ENCODE measurements at regions of chr5 and their contacts with region 1.

Region 1: GRCh38 chr5:14326035-14326903 is 183.1 kb downstream of the TRIO start:
- DNase-seq: no peak
- ATAC-seq: peak; percentile 53
- H3K4me3 Mint-ChIP-seq: no peak overlapping the region
- H3K27ac Mint-ChIP-seq: peak overlapping the region; percentile 0
- H3K4me1 Mint-ChIP-seq: peaks cover 34% of the 10 kb centered on the region
- H3K27me3 Mint-ChIP-seq: no peaks in the 10 kb centered on the region
- CTCF ChIP-seq: no peak

Region 2: DNA sequence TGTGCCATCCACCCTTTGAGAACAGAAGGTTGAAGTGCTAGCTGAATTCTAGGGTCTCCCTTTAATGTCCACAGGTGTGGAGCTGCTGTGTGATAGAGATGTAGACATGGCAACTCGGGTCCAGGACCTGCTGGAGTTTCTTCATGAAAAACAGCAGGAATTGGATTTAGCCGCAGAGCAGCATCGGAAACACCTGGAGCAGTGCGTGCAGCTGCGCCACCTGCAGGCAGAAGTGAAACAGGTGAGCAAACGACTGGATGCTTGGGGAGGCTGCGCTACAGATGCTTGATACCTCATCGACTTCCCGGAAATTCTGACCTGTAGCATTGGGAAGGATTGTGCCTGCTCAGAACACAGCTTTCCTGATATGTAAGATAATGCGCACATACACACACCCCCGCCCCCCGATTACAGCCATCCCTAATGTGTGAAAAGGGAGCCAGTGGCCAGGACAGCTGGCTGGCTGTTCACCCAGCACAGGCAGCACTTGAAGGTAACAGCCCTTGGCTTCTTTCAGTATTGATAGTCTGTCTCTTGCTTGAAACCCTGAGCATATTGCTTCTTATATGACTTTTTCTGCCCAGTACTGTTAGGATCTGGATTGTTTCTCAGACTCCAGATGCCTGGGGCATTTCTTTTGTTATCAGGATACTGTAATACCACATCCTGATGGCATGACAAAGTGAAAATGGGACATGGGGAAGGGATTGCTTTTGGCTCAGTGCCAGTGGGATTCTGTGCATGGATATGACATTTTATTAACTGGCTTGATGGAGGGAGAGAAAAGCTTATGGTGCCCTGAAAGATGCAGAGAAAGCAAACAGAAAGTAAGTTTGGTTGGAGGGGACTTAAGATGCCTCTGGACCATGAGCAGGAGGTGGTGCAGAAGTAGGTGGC is 38.6 kb after region 1 on chr5:
- CTCF ChIA-PET with region 1: interaction called, 26 read pairs
- POLR2A ChIA-PET with region 1: no interaction called
- intact Hi-C with region 1: loop called (anchors 1 kb)
- DNase-seq: no peak
- ATAC-seq: no peak
- H3K4me3 Mint-ChIP-seq: no peak overlapping the region
- H3K27ac Mint-ChIP-seq: no peak overlapping the region
- H3K4me1 Mint-ChIP-seq: peaks cover 19% of the 10 kb centered on the region
- H3K27me3 Mint-ChIP-seq: no peaks in the 10 kb centered on the region
- CTCF ChIP-seq: no peak

Region 3: DNA sequence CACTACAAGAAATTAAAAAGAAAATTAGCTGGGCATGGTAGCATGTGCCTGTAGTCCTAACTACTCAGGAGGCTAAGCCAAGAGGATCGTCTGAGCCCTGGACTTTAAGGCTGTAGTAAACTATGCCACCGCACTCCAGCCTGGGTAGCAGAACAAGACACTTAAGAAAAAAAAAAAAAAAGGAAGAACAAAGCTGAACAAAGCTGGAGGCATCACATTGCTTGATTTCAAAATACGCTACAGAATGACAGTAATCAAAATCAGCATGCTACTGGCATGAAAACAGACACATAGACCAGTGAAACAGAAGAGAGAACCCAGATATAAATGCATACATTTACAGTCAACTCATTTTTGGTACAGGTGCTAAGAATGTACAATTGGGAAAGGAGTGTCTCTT is 323.8 kb after region 1 on chr5:
- CTCF ChIA-PET with region 1: interaction called, 23 read pairs
- POLR2A ChIA-PET with region 1: no interaction called
- intact Hi-C with region 1: no loop called
- DNase-seq: no peak
- ATAC-seq: no peak
- H3K4me3 Mint-ChIP-seq: no peak overlapping the region
- H3K27ac Mint-ChIP-seq: no peak overlapping the region
- H3K4me1 Mint-ChIP-seq: peaks cover 2% of the 10 kb centered on the region
- H3K27me3 Mint-ChIP-seq: peaks cover 9% of the 10 kb centered on the region
- CTCF ChIP-seq: no peak